ENCODE measurements at regions of chr1 and their contacts with region 1.

Region 1: GRCh38 chr1:245673881-245674414 is 519.2 kb downstream of the KIF26B start:
- DNase-seq: no peak
- H3K4me3 ChIP-seq: no peak overlapping the region
- H3K27ac ChIP-seq: no peak overlapping the region
- H3K4me1 ChIP-seq: no peaks in the 10 kb centered on the region
- H3K27me3 ChIP-seq: no peaks in the 10 kb centered on the region
- CTCF ChIP-seq: no peak

Region 2: GRCh38 chr1:245380790-245381535 is 293.0 kb before region 1 on chr1:
- CTCF ChIA-PET with region 1: interaction called, 14 read pairs
- POLR2A ChIA-PET with region 1: no interaction called
- intact Hi-C with region 1: no loop called
- DNase-seq: no peak
- H3K4me3 ChIP-seq: no peak overlapping the region
- H3K27ac ChIP-seq: no peak overlapping the region
- H3K4me1 ChIP-seq: no peaks in the 10 kb centered on the region
- H3K27me3 ChIP-seq: peaks cover 28% of the 10 kb centered on the region
- CTCF ChIP-seq: peak; percentile 52

Region 3: GRCh38 chr1:246437961-246438360 is 764.0 kb after region 1 on chr1:
- CTCF ChIA-PET with region 1: no interaction called
- POLR2A ChIA-PET with region 1: no interaction called
- intact Hi-C with region 1: no loop called
- DNase-seq: no peak
- H3K4me3 ChIP-seq: no peak overlapping the region
- H3K27ac ChIP-seq: no peak overlapping the region
- H3K4me1 ChIP-seq: peaks cover 6% of the 10 kb centered on the region
- H3K27me3 ChIP-seq: no peaks in the 10 kb centered on the region
- CTCF ChIP-seq: no peak

Measured in A673 (cell line).